ENCODE measurements at regions of chr2 and their contacts with region 1.

Region 1: DNA sequence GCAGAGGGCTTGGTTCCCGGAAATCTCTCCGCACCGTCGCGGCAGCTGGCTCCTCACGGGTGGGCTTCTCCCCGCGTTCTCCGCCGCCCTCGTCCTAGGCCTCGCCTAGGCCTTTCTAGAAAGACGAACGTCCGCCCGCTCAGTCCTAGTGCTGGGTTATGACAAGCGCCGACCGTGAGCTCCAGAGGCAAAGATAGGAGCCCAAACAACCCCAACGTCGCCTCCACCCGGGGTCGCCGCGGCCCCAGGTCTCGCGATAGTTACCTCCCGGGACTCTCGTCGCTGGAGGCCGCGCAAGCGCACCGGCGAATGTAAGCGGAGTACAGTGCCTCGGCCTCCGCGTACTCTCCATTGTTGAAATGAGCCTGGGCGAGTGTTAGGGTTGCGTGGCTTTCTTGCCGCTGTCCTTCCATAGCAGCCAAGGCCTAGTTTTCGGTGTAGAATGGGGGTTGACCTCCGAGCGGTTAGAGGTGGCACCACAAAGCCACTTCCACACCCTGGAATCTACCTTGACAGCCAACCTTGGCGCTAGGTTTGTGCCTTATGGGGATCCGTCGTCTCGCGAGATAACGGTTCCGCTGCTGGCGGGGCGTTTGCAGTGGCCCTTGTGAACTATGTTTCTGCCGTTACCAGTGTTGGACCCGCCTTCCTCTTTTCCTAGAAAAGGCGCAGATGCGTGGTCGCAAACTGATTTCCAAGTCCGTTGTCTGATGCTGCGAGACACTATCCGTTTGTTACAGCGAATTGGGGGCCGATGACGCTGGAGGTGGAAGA is at the start of gene TTC32:
- DNase-seq: peak; percentile 82
- ATAC-seq: peak; percentile 86
- H3K4me3 ChIP-seq: peak within 1 kb of the TSS; percentile 85
- H3K27ac ChIP-seq: peak within 1 kb of the TSS; percentile 99
- H3K4me1 ChIP-seq: peaks cover 8% of the 10 kb centered on the region
- H3K27me3 ChIP-seq: no peaks in the 10 kb centered on the region
- CTCF ChIP-seq: no peak
- EP300 ChIP-seq: peak in 1 of 2 experiments; percentile 6; a peak in 1 of 4 replicates
- POLR2A ChIP-seq: peak; percentile 98
- RAD21 ChIP-seq: no peak
- polyA plus RNA-seq, gene TTC32: 21.6 to 25.3 TPM

Region 2: DNA sequence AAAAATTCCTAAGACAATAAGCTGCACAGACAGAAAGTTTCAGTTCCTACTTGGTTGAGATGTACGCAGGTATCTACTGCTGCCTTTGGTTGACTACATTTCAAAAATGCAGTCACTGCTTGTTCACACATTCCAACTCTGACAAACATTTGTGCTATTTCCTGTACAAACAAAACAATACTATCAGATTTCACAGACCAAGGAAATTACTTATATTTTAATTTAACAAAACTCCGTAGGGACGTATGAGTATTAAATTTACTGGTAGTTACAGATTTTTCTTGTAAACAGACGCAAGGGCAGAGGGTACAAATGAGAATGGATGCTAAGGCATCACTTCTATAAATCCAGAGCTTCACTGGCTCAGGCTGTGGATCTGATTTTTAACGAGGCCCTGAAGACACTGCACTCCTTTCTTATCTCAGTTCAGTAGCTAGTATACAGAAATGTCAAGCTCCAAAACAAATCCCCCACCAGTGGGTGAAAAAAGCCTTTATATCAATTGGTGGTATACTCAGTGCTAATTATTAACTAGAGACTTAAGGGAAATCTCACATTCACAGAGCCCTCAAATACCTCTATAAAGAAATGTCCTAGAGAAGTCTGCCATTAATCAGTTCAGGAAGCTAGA is 31.8 kb after region 1 on chr2:
- CTCF ChIA-PET with region 1: interaction called, 4 read pairs
- POLR2A ChIA-PET with region 1: interaction called, 6 read pairs
- RAD21 ChIA-PET with region 1: interaction called, 6 read pairs
- SMC1A ChIA-PET with region 1: interaction called, 14 read pairs
- in situ Hi-C with region 1: no loop called
- intact Hi-C with region 1: no loop called
- DNase-seq: peak; percentile 8
- ATAC-seq: peak; percentile 96
- H3K4me3 ChIP-seq: no peak overlapping the region
- H3K27ac ChIP-seq: no peak overlapping the region
- H3K4me1 ChIP-seq: no peaks in the 10 kb centered on the region
- H3K27me3 ChIP-seq: no peaks in the 10 kb centered on the region
- CTCF ChIP-seq: no peak
- EP300 ChIP-seq: peak in 1 of 2 experiments; percentile 52; a peak in 2 of 4 replicates
- POLR2A ChIP-seq: no peak
- RAD21 ChIP-seq: no peak

Region 3: DNA sequence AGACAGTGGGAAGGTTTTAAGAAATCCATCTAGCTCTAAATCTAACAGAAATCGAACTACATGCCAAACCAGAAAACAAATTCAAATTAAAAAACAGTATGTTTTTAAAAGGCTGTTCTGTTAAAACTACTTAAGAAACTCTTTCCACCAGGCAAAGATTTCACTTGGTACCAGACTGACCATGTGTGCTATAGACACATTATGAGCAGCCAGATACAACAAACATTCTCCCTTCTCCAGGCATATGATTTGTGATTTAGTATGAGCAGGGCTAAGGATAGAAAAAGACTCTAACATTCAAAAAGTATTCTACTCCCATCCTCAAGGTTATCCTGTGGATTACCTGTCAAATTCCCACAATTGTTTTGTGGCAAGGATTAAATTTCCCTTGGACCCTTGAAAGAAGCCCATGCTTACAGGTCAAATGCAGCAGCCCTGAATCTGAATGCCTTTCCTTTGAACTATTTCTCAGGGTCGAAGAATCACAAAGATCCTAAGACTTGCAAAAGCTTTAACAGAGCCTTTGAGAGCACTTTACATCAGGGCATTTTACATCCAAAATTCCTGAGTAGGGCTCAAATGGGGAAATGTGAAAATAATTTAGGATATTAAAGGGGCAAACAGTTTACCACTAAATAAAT is 42.7 kb after region 1 on chr2:
- CTCF ChIA-PET with region 1: no interaction called
- POLR2A ChIA-PET with region 1: no interaction called
- RAD21 ChIA-PET with region 1: no interaction called
- SMC1A ChIA-PET with region 1: no interaction called
- in situ Hi-C with region 1: no loop called
- intact Hi-C with region 1: no loop called
- DNase-seq: no peak
- ATAC-seq: no peak
- H3K4me3 ChIP-seq: no peak overlapping the region
- H3K27ac ChIP-seq: no peak overlapping the region
- H3K4me1 ChIP-seq: no peaks in the 10 kb centered on the region
- H3K27me3 ChIP-seq: no peaks in the 10 kb centered on the region
- CTCF ChIP-seq: no peak
- EP300 ChIP-seq: no peak
- POLR2A ChIP-seq: no peak
- RAD21 ChIP-seq: no peak

Region 4: GRCh38 chr2:19989681-19990415 is 88.2 kb after region 1 on chr2 and contains the start of gene WDR35:
- CTCF ChIA-PET with region 1: interaction called, 3 read pairs
- POLR2A ChIA-PET with region 1: interaction called, 3 read pairs
- RAD21 ChIA-PET with region 1: interaction called, 3 read pairs
- SMC1A ChIA-PET with region 1: interaction called, 6 read pairs
- in situ Hi-C with region 1: no loop called
- intact Hi-C with region 1: loop called (anchors 2 kb)
- DNase-seq: peak; percentile 53
- ATAC-seq: peak; percentile 94
- H3K4me3 ChIP-seq: peak within 1 kb of the TSS; percentile 95
- H3K27ac ChIP-seq: peak within 1 kb of the TSS; percentile 28; the same call in 1 of the 2 replicates
- H3K4me1 ChIP-seq: peaks cover 6% of the 10 kb centered on the region; the same call in 1 of the 2 replicates
- H3K27me3 ChIP-seq: no peaks in the 10 kb centered on the region
- CTCF ChIP-seq: no peak
- EP300 ChIP-seq: no peak; a peak in 1 of 4 replicates
- POLR2A ChIP-seq: peak; percentile 80
- RAD21 ChIP-seq: no peak
- polyA plus RNA-seq, gene WDR35: 3.0 to 3.2 TPM